Ascending aorta (tissue), 2 donors: ENCODE measurements at regions of chr14 and their contacts with region 1.

Region 1: DNA sequence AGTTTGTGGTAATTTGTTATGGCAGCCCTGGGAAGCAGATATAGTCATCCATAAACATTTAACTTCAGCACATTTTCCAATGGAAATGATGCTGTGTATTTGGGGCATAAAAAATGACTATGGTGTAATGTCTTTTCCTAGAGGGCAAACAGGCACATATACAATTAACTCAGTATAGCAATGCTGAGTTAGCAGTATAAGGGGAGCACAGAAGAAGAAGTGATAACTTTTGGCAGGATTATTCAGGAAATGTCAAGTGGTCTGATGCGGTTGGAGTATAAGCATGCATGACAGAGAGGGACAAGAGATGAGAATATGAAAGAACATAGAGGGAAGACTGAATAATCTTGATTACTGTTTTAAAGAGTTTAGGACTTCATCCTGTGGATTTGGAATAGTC is 55.3 kb upstream of the PRKD1 start:
- DNase-seq: no peak
- H3K4me3 ChIP-seq: no peak overlapping the region
- H3K27ac ChIP-seq: no peak overlapping the region
- H3K4me1 ChIP-seq: no peaks in the 10 kb centered on the region
- H3K27me3 ChIP-seq: no peaks in the 10 kb centered on the region
- CTCF ChIP-seq: no peak

Region 2: GRCh38 chr14:30015489-30015888 is 32.5 kb after region 1 on chr14:
- intact Hi-C with region 1: loop called (anchors 1 kb)
- DNase-seq: no peak
- H3K4me3 ChIP-seq: no peak overlapping the region
- H3K27ac ChIP-seq: no peak overlapping the region
- H3K4me1 ChIP-seq: no peaks in the 10 kb centered on the region
- H3K27me3 ChIP-seq: no peaks in the 10 kb centered on the region
- CTCF ChIP-seq: no peak

Region 3: GRCh38 chr14:30115756-30116155 is 132.8 kb after region 1 on chr14:
- intact Hi-C with region 1: no loop called
- DNase-seq: no peak
- H3K4me3 ChIP-seq: no peak overlapping the region
- H3K27ac ChIP-seq: no peak overlapping the region
- H3K4me1 ChIP-seq: no peaks in the 10 kb centered on the region
- H3K27me3 ChIP-seq: no peaks in the 10 kb centered on the region
- CTCF ChIP-seq: no peak